ENCODE measurements at regions of chr7 and their contacts with region 1.

Region 1: DNA sequence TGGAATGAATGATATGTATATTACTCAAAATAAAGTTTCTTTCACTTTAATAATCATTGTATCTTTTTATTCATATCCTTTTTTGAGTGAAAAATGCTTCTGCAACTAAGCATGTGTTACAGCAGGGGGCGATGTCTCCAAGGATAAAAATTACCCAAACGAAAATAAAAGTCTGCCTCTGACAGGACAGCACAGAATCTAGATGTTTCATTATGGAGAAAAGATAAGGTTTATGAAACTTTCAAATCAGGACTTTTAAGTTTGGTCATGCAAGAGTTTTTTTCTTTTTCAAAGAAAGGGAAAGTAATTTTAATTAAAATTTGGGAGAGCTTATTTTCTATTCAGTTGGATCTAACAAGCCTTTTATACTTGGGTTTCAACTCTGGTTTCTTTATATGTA is 48.4 kb downstream of the TES start:
- DNase-seq: peak; percentile 52
- H3K4me3 Mint-ChIP-seq: no peak overlapping the region
- H3K27ac Mint-ChIP-seq: no peak overlapping the region
- H3K4me1 Mint-ChIP-seq: peaks cover 11% of the 10 kb centered on the region
- H3K27me3 Mint-ChIP-seq: no peaks in the 10 kb centered on the region

Region 2: GRCh38 chr7:116180302-116180701 is 78.4 kb before region 1 on chr7:
- CTCF ChIA-PET with region 1: interaction called, 11 read pairs
- intact Hi-C with region 1: no loop called
- DNase-seq: peak; percentile 20
- H3K4me3 Mint-ChIP-seq: no peak overlapping the region
- H3K27ac Mint-ChIP-seq: no peak overlapping the region
- H3K4me1 Mint-ChIP-seq: no peaks in the 10 kb centered on the region
- H3K27me3 Mint-ChIP-seq: no peaks in the 10 kb centered on the region

Region 3: GRCh38 chr7:116451958-116452729 is 193.4 kb after region 1 on chr7:
- CTCF ChIA-PET with region 1: interaction called, 3 read pairs
- intact Hi-C with region 1: loop called (anchors 5 kb)
- DNase-seq: no peak
- H3K4me3 Mint-ChIP-seq: no peak overlapping the region
- H3K27ac Mint-ChIP-seq: no peak overlapping the region
- H3K4me1 Mint-ChIP-seq: no peaks in the 10 kb centered on the region
- H3K27me3 Mint-ChIP-seq: peaks cover 7% of the 10 kb centered on the region

Region 4: DNA sequence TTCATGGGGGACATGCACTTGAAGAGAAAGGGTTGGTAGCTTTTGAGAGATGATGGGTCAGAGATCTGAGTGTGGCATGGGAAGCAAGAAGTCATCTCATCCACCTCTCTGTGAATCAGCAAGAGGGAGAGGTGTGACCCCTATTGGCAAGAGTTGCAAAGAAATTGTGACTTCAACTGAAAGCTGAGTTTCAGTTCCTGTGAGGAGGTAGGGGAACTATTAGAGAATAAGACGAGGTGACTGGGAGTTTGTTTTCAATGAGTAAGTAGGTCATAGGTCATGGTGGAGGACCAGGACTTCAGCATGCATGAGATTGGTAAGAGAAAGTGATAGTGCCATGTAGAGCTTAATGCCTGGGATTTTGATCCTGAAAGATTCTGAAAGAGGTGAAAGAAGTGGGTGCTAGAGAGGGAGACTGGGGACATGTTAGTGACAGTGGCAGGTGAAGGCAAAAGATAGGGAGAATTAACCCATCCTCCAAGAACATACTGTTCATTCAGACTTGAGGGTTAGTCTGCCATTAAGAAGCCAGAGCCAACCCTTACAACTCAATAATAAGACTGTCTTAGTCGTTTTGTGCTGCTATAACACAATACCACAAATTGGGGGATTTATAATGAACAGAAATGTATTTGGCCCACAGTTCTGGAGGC is 528.2 kb after region 1 on chr7:
- CTCF ChIA-PET with region 1: no interaction called
- intact Hi-C with region 1: loop called (anchors 1 kb)
- DNase-seq: peak; percentile 63
- H3K4me3 Mint-ChIP-seq: no peak overlapping the region
- H3K27ac Mint-ChIP-seq: no peak overlapping the region
- H3K4me1 Mint-ChIP-seq: no peaks in the 10 kb centered on the region
- H3K27me3 Mint-ChIP-seq: peaks cover 3% of the 10 kb centered on the region

Measured in activated naive CD4-positive, alpha-beta T cell treated with anti-CD3 and anti-CD28 coated beads for 36 hours (primary cell).